ENCODE measurements at regions of chr2 and their contacts with region 1.

Region 1: DNA sequence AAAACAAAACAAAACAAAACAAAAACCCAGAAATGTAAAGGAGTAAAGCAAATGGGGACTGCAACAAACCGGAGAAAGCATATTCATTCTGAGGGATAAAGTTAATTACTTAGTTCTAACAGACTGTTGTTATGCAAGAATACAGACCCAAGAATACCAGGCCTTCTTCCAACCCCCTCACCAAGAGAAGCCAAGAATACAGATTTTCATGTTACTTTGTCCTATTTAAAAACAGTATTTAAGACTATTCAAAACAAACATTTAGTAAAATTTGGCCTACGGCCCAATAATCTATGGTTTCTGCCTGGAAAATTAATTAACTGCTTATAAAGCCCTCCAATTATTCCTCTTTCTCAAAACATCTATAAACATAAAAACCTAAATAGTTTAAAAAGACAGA is 91.4 kb downstream of the USP34 start:
- DNase-seq: no peak
- ATAC-seq: no peak
- H3K4me3 ChIP-seq: no peak overlapping the region
- H3K4me3 Mint-ChIP-seq: no peak overlapping the region
- H3K27ac ChIP-seq: no peak overlapping the region
- H3K27ac Mint-ChIP-seq: peak overlapping the region in 1 of 2 donors; percentile 4
- H3K4me1 ChIP-seq: no peaks in the 10 kb centered on the region
- H3K4me1 Mint-ChIP-seq: peaks cover 14 to 23% (median 18%) of the 10 kb centered on the region in 3 donors
- H3K27me3 ChIP-seq: no peaks in the 10 kb centered on the region
- H3K27me3 Mint-ChIP-seq: no peaks in the 10 kb centered on the region

Region 2: DNA sequence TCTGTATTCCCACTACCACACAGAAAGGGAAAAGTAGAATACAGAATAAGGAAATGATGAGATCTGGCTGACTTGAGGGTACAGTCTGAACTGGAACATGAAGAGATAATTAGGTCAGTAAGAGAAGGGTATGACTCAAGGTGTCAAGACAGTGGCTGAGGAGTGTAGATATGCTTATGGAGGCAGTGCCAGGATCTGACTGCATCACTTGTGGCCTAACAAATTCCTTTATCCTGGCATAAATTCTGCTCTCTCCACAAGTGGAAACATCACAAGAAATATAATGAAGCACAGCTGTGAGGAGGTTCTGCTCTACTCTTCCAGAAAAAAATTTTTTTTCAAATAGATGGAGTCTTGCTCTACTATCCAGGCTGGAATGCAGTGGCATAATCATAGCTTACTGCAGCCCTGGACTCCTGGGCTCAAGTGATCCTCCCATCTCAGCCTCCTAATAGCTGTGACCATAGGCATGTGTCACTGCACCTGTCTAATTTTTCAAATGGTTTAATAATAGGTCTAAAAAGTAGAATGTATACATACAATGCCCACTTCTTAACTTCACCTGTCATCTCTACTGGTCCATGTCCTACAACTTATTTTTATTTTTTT is 132.2 kb before region 1 on chr2:
- CTCF ChIA-PET with region 1: no interaction called
- POLR2A ChIA-PET with region 1: interaction called in 1 of 2 experiments, 10 read pairs
- DNase-seq: no peak
- ATAC-seq: no peak
- H3K4me3 ChIP-seq: no peak overlapping the region
- H3K4me3 Mint-ChIP-seq: no peak overlapping the region
- H3K27ac ChIP-seq: no peak overlapping the region
- H3K27ac Mint-ChIP-seq: no peak overlapping the region
- H3K4me1 ChIP-seq: no peaks in the 10 kb centered on the region
- H3K4me1 Mint-ChIP-seq: no peaks in the 10 kb centered on the region
- H3K27me3 ChIP-seq: no peaks in the 10 kb centered on the region
- H3K27me3 Mint-ChIP-seq: no peaks in the 10 kb centered on the region

Region 3: DNA sequence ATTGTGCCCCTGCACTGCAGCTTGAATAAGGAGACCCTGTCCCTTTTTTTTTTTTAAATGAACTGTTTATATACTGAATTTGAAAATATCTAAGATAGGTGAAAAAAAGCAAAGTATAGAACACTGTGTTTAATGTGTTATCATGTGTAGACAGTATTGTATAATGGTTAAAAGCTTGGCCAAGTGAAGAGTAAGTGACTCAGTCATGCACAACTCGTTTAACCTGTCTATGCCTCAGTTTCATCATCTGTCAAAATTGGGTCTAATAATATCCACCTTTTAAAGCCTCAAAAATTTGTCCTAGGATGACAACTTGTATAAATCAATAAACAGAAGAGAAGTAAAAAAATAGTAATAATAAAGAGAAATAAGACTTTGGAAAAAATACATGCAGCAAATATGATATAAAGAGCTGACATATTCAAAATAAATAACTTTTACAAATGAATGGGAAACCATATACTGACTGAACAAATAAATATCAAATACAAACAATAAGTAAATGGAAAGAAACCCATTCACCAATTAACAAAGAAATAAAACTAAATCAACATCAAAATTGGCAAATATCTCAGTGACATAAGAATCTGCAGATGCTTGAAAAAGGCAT is 103.8 kb before region 1 on chr2:
- CTCF ChIA-PET with region 1: no interaction called
- POLR2A ChIA-PET with region 1: no interaction called
- DNase-seq: no peak
- ATAC-seq: no peak
- H3K4me3 ChIP-seq: no peak overlapping the region
- H3K4me3 Mint-ChIP-seq: no peak overlapping the region
- H3K27ac ChIP-seq: no peak overlapping the region
- H3K27ac Mint-ChIP-seq: no peak overlapping the region
- H3K4me1 ChIP-seq: no peaks in the 10 kb centered on the region
- H3K4me1 Mint-ChIP-seq: no peaks in the 10 kb centered on the region
- H3K27me3 ChIP-seq: no peaks in the 10 kb centered on the region
- H3K27me3 Mint-ChIP-seq: no peaks in the 10 kb centered on the region

Region 4: GRCh38 chr2:61396005-61396404 is 16.5 kb after region 1 on chr2:
- CTCF ChIA-PET with region 1: interaction called in 1 of 2 experiments, 3 read pairs
- POLR2A ChIA-PET with region 1: interaction called, 3 to 12 read pairs
- DNase-seq: no peak
- ATAC-seq: no peak
- H3K4me3 ChIP-seq: no peak overlapping the region
- H3K4me3 Mint-ChIP-seq: no peak overlapping the region
- H3K27ac ChIP-seq: no peak overlapping the region
- H3K27ac Mint-ChIP-seq: no peak overlapping the region
- H3K4me1 ChIP-seq: no peaks in the 10 kb centered on the region
- H3K4me1 Mint-ChIP-seq: no peaks in the 10 kb centered on the region
- H3K27me3 ChIP-seq: no peaks in the 10 kb centered on the region
- H3K27me3 Mint-ChIP-seq: no peaks in the 10 kb centered on the region

Region 5: GRCh38 chr2:61426267-61426897 is 46.9 kb after region 1 on chr2:
- CTCF ChIA-PET with region 1: no interaction called
- POLR2A ChIA-PET with region 1: no interaction called
- DNase-seq: peak; percentile 52 to 83 (median 72)
- ATAC-seq: peak; percentile 88 to 89 (median 88)
- H3K4me3 ChIP-seq: no peak overlapping the region
- H3K4me3 Mint-ChIP-seq: peak overlapping the region in 2 of 3 donors; percentile 7 to 13
- H3K27ac ChIP-seq: peak overlapping the region; percentile 69
- H3K27ac Mint-ChIP-seq: peak overlapping the region; percentile 89 to 97
- H3K4me1 ChIP-seq: peaks cover 4 to 40% of the 10 kb centered on the region in 2 experiments
- H3K4me1 Mint-ChIP-seq: peaks cover 70 to 75% (median 74%) of the 10 kb centered on the region in 3 donors
- H3K27me3 ChIP-seq: no peaks in the 10 kb centered on the region
- H3K27me3 Mint-ChIP-seq: no peaks in the 10 kb centered on the region

Measured in T-cell (primary cell).